ENCODE measurements at regions of chr13 and their contacts with region 1.

Region 1: DNA sequence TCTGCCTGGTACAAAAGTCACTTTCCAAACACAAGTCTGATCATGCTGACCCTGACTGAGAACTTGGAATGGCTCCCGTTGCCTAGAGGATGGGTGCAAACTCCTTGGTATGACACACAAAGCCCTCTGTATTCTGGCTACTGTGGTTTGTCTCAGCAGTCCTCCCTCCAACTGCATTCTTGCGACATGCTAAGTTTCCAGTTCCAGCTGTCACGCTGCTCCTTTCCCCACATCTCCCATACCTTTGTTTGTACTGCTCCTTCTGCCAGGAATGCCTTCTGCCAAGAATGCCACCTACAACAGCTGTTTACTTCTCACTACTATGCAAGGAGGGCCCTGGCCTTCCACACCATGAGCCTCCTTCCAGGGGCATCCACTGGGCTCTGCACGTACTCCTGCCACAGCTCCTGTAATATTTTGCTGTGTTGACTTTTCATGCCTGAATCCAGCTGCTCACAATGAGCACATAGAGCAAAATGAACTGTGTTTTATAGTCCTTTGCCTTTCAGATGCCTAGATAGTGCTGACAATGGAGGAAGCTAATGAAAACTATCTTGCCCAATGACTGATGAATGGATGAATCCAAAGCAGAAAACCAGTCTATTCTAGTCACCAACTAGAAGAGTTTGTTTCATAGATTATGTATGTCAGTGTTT is 543.7 kb downstream of the EFNB2 start:
- DNase-seq: peak; percentile 100
- H3K4me3 ChIP-seq: no peak overlapping the region
- H3K27ac ChIP-seq: peak overlapping the region; percentile 100
- H3K4me1 ChIP-seq: peaks cover 26% of the 10 kb centered on the region
- H3K27me3 ChIP-seq: no peaks in the 10 kb centered on the region
- CTCF ChIP-seq: peak in 1 of 2 donors; percentile 41

Region 2: GRCh38 chr13:104318121-104318520 is 1673.6 kb before region 1 on chr13:
- CTCF ChIA-PET with region 1: no interaction called
- dilution Hi-C with region 1: no loop called
- in situ Hi-C with region 1: no loop called
- intact Hi-C with region 1: loop called (anchors 5 kb)
- DNase-seq: peak; percentile 34
- H3K4me3 ChIP-seq: no peak overlapping the region
- H3K27ac ChIP-seq: no peak overlapping the region
- H3K4me1 ChIP-seq: peaks cover 14% of the 10 kb centered on the region
- H3K27me3 ChIP-seq: no peaks in the 10 kb centered on the region
- CTCF ChIP-seq: peak; percentile 30 to 55

Region 3: GRCh38 chr13:105442941-105443340 is 548.8 kb before region 1 on chr13:
- CTCF ChIA-PET with region 1: no interaction called
- dilution Hi-C with region 1: no loop called
- in situ Hi-C with region 1: no loop called
- intact Hi-C with region 1: loop called (anchors 10 kb)
- DNase-seq: peak; percentile 99
- H3K4me3 ChIP-seq: no peak overlapping the region
- H3K27ac ChIP-seq: peak overlapping the region; percentile 97
- H3K4me1 ChIP-seq: no peaks in the 10 kb centered on the region
- H3K27me3 ChIP-seq: no peaks in the 10 kb centered on the region
- CTCF ChIP-seq: no peak

Region 4: DNA sequence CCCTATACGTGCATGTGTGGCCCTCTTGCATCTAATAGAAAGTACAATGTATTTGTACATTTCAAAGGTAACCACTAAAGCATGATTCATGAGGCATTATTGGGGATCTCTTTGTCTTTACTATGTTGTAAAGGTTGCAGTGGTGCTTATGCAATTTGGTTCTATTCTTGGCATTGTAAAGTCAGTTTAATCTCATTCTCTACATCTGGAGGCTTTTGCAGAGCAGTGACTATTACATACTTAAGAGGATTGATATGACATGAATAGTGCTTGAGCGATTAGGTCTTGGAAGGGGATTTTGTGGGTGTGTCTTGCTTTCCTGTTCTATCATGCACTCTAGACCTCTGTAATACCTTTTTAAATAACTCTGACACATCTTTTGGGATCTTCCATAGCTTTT is 66.3 kb before region 1 on chr13:
- CTCF ChIA-PET with region 1: no interaction called
- dilution Hi-C with region 1: no loop called
- in situ Hi-C with region 1: no loop called
- intact Hi-C with region 1: loop called (anchors 1 kb)
- DNase-seq: peak; percentile 98
- H3K4me3 ChIP-seq: no peak overlapping the region
- H3K27ac ChIP-seq: peak overlapping the region; percentile 84
- H3K4me1 ChIP-seq: peaks cover 29% of the 10 kb centered on the region
- H3K27me3 ChIP-seq: no peaks in the 10 kb centered on the region
- CTCF ChIP-seq: no peak

Region 5: DNA sequence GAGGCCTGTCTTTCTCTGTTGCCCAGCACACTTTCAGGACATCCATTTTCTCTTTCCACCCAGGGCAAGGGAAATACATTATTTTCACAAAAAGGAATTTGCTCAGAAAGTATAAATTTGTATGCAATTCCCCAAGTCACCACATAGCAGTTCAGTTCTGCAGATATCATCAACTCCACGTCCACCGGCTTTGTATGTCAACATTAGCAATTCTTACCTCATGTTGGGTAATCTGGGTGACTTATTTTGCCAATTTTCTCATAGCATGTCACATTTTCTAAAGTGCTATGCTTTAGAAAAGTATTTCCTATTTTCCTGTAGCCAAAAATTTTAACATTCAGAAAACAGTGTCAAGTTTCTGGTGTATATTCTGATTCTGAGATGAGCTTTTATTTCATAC is 41.9 kb after region 1 on chr13:
- CTCF ChIA-PET with region 1: no interaction called
- dilution Hi-C with region 1: no loop called
- in situ Hi-C with region 1: no loop called
- intact Hi-C with region 1: no loop called
- DNase-seq: no peak
- H3K4me3 ChIP-seq: no peak overlapping the region
- H3K27ac ChIP-seq: no peak overlapping the region
- H3K4me1 ChIP-seq: peaks cover 6% of the 10 kb centered on the region
- H3K27me3 ChIP-seq: no peaks in the 10 kb centered on the region
- CTCF ChIP-seq: peak in 1 of 2 donors; percentile 19

Region 6: GRCh38 chr13:106083620-106084350 is 92.0 kb after region 1 on chr13:
- CTCF ChIA-PET with region 1: no interaction called
- dilution Hi-C with region 1: loop called (anchors 5 kb)
- in situ Hi-C with region 1: no loop called
- intact Hi-C with region 1: no loop called
- DNase-seq: peak; percentile 71
- H3K4me3 ChIP-seq: no peak overlapping the region
- H3K27ac ChIP-seq: peak overlapping the region; percentile 14
- H3K4me1 ChIP-seq: peaks cover 6% of the 10 kb centered on the region
- H3K27me3 ChIP-seq: no peaks in the 10 kb centered on the region
- CTCF ChIP-seq: peak; percentile 87 to 90

Region 7: GRCh38 chr13:106212386-106213010 is 220.7 kb after region 1 on chr13:
- CTCF ChIA-PET with region 1: no interaction called
- dilution Hi-C with region 1: no loop called
- in situ Hi-C with region 1: no loop called
- intact Hi-C with region 1: no loop called
- DNase-seq: no peak
- H3K4me3 ChIP-seq: no peak overlapping the region
- H3K27ac ChIP-seq: no peak overlapping the region
- H3K4me1 ChIP-seq: no peaks in the 10 kb centered on the region
- H3K27me3 ChIP-seq: no peaks in the 10 kb centered on the region
- CTCF ChIP-seq: no peak

Region 8: DNA sequence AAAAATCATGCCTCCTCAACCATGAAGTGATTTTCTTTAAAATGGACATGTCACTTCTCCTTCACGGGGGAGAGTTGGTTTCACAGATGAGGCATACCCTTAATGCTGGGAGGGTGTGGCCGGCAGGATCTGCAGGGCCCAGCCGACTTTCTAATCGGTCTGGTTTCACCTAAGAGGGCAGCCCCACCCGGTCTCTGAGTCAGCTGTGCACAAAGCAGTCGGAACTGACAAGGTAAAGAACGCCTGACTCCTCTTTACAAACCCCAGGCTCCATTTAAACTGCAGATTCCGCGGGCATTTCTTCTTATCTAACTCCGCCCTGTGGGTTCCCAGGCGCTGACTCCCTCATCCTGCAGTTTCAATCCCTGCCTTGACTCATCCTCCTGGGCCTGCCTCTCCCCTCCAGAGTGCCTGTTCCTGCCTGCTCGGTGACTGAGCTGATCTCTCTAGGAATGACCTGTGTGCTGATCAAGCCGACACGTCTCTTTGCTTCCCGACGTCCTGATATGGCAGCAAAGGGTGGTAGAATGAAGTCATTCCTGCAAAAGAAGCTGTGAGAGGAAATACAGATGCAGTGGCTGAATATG is 480.3 kb after region 1 on chr13:
- CTCF ChIA-PET with region 1: no interaction called
- dilution Hi-C with region 1: no loop called
- in situ Hi-C with region 1: no loop called
- intact Hi-C with region 1: loop called (anchors 5 kb)
- DNase-seq: peak; percentile 100
- H3K4me3 ChIP-seq: no peak overlapping the region
- H3K27ac ChIP-seq: peak overlapping the region; percentile 99
- H3K4me1 ChIP-seq: peaks cover 22% of the 10 kb centered on the region
- H3K27me3 ChIP-seq: no peaks in the 10 kb centered on the region
- CTCF ChIP-seq: no peak

Measured in mammary epithelial cell (primary cell).